Adrenal gland (tissue), 19 donors: ENCODE measurements at regions of chr12 and their contacts with region 1.

Region 1: GRCh38 chr12:64419696-64420095 is 15.5 kb downstream of the XPOT start:
- DNase-seq: no peak
- H3K4me3 ChIP-seq: no peak overlapping the region
- H3K27ac ChIP-seq: no peak overlapping the region
- H3K4me1 ChIP-seq: no peaks in the 10 kb centered on the region
- H3K27me3 ChIP-seq: no peaks in the 10 kb centered on the region
- CTCF ChIP-seq: no peak
- POLR2A ChIP-seq: no peak

Region 2: GRCh38 chr12:64469455-64470142 is 49.9 kb after region 1 on chr12:
- intact Hi-C with region 1: loop called in 1 of 2 experiments (anchors 10 kb)
- DNase-seq: peak in 5 of 7 donors; percentile 44 to 67 (median 49)
- H3K4me3 ChIP-seq: no peak overlapping the region
- H3K27ac ChIP-seq: peak overlapping the region; percentile 62 to 80 (median 72)
- H3K4me1 ChIP-seq: peaks cover 28 to 33% of the 10 kb centered on the region in 2 donors
- H3K27me3 ChIP-seq: no peaks in the 10 kb centered on the region
- CTCF ChIP-seq: no peak
- POLR2A ChIP-seq: no peak